Lower leg skin (tissue), 4 donors: ENCODE measurements at regions of chr11 and their contacts with region 1.

Region 1: DNA sequence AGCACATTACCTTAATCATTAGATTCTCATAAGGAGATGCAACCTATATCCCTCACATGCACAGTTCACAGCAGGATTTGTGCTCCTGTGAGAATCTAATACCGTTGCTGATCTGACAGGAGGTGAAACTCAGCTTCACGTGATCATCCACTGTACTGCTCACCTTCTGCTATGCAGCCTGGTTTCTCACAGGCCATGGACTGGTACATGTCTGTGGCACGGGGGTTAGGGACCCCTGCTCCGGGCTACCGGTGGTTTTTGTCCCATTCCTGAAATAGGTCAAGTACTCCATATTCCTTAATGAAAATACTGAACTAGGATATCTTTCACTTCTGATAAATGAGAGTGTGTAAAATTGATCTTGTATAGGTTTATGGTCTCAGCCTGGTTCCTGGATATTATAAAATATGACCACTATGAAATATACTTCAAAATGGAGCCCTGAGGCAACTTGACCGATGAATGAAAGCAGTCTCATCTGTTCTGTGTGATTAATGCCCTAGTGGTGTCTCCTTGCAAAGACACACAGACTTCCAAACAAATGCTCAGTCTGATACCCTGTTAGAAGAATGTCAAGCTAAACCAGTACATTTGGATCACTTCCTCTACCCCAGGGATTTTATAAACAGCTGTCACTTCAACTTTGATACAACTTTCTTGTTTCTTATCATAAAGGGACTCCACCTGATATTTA is 492.9 kb upstream of the ANO3 start:
- DNase-seq: no peak
- H3K4me3 ChIP-seq: no peak overlapping the region
- CTCF ChIP-seq: no peak
- POLR2A ChIP-seq: no peak

Region 2: DNA sequence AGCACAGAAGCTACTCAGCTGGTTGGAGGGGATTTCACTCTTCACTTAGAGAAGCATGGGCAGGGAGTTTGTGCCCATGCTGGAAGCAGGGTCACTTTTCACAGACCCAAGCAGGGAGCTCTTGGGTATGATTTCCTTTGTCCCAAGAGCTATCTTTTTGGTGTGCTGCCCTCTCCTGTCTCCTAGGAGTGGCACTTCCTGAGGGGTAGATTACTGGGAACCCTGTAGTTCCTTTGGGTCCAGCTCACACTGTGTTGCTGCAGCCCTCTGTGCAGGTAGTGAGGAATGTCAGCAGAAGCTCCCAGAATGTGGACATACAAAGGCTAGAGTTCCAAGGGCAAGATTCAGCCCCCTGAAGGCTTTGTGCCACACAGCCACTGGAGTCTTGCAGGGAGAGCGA is 44.3 kb before region 1 on chr11:
- intact Hi-C with region 1: loop called (anchors 1 kb)
- DNase-seq: peak in 1 of 2 donors; percentile 68
- H3K4me3 ChIP-seq: no peak overlapping the region
- CTCF ChIP-seq: no peak
- POLR2A ChIP-seq: no peak